Natural killer cell (primary cell): ENCODE measurements at regions of chr7 and their contacts with region 1.

Region 1: GRCh38 chr7:139109188-139109982 is at the start of gene ZC3HAV1:
- DNase-seq: peak; percentile 83 to 97
- ATAC-seq: peak; percentile 80 to 91 (median 83)
- H3K4me3 ChIP-seq: peak within 1 kb of the TSS; percentile 91
- H3K4me3 Mint-ChIP-seq: peak within 1 kb of the TSS; percentile 97
- H3K27ac ChIP-seq: peak within 1 kb of the TSS; percentile 89
- H3K27ac Mint-ChIP-seq: peak within 1 kb of the TSS; percentile 96 to 99
- H3K4me1 ChIP-seq: peaks cover 17% of the 10 kb centered on the region
- H3K4me1 Mint-ChIP-seq: peaks cover 50 to 51% of the 10 kb centered on the region in 2 donors
- H3K27me3 ChIP-seq: no peaks in the 10 kb centered on the region
- H3K27me3 Mint-ChIP-seq: no peaks in the 10 kb centered on the region
- CTCF ChIP-seq: no peak
- total RNA-seq, gene ZC3HAV1: 129 to 153 (median 137) TPM

Region 2: DNA sequence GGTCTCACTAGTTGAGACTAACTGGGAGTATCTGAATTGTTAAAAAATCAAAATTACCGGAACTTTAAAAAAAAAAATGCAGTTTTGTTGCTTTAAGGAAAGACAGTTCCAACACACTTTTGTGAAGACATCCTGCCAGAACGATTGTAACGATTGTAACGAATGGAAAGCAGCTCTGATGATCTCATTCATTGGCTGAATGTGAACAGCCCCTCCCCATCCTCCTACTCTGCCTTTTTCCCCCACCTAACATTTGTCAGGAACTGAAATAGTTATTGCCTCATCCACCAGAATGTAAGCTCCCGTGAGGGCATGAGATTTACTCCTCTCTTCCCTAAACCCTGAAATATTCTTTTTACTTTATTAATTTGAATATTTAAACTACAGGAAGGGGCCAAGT is 50.4 kb before region 1 on chr7:
- intact Hi-C with region 1: no loop called
- DNase-seq: no peak
- ATAC-seq: no peak
- H3K4me3 ChIP-seq: no peak overlapping the region
- H3K4me3 Mint-ChIP-seq: no peak overlapping the region
- H3K27ac ChIP-seq: no peak overlapping the region
- H3K27ac Mint-ChIP-seq: no peak overlapping the region
- H3K4me1 ChIP-seq: no peaks in the 10 kb centered on the region
- H3K4me1 Mint-ChIP-seq: peaks cover 31 to 32% of the 10 kb centered on the region in 2 donors
- H3K27me3 ChIP-seq: no peaks in the 10 kb centered on the region
- H3K27me3 Mint-ChIP-seq: no peaks in the 10 kb centered on the region
- CTCF ChIP-seq: no peak

Region 3: GRCh38 chr7:139230774-139231512 is 121.6 kb after region 1 on chr7 and contains the start of gene UBN2:
- intact Hi-C with region 1: loop called (anchors 1 kb)
- DNase-seq: peak; percentile 75 to 95
- ATAC-seq: peak; percentile 73 to 86 (median 78)
- H3K4me3 ChIP-seq: peak within 1 kb of the TSS; percentile 100
- H3K4me3 Mint-ChIP-seq: peak within 1 kb of the TSS; percentile 99
- H3K27ac ChIP-seq: peak within 1 kb of the TSS; percentile 92
- H3K27ac Mint-ChIP-seq: peak within 1 kb of the TSS; percentile 94 to 95
- H3K4me1 ChIP-seq: peaks cover 12% of the 10 kb centered on the region
- H3K4me1 Mint-ChIP-seq: peaks cover 22 to 28% of the 10 kb centered on the region in 2 donors
- H3K27me3 ChIP-seq: no peaks in the 10 kb centered on the region
- H3K27me3 Mint-ChIP-seq: peaks cover 3 to 6% of the 10 kb centered on the region in 2 donors
- CTCF ChIP-seq: no peak
- total RNA-seq, gene UBN2: 17.6 to 33.2 (median 21.2) TPM